ENCODE measurements at regions of chr14 and their contacts with region 1.

Region 1: DNA sequence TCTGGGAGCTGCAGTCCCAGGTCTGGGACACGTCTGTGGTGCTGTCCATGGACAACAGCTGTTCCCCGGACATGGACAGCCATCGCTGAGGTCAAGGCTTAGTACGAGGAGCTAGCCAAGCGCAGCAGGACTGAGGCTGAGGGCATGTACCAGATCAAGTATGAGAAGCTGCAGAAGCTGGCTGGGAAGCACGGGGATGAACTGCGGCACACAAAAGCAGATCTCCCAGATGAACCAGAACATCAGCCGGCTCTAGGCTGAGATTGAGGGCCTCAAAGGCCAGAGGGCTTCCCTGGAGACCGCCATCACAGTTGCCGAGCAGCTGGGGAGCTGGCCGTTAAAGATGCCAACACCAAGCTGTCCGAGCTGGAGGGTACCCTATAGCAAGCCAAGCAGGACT is 375.3 kb downstream of the SEC23A start:
- DNase-seq: no peak
- ATAC-seq: no peak

Region 2: DNA sequence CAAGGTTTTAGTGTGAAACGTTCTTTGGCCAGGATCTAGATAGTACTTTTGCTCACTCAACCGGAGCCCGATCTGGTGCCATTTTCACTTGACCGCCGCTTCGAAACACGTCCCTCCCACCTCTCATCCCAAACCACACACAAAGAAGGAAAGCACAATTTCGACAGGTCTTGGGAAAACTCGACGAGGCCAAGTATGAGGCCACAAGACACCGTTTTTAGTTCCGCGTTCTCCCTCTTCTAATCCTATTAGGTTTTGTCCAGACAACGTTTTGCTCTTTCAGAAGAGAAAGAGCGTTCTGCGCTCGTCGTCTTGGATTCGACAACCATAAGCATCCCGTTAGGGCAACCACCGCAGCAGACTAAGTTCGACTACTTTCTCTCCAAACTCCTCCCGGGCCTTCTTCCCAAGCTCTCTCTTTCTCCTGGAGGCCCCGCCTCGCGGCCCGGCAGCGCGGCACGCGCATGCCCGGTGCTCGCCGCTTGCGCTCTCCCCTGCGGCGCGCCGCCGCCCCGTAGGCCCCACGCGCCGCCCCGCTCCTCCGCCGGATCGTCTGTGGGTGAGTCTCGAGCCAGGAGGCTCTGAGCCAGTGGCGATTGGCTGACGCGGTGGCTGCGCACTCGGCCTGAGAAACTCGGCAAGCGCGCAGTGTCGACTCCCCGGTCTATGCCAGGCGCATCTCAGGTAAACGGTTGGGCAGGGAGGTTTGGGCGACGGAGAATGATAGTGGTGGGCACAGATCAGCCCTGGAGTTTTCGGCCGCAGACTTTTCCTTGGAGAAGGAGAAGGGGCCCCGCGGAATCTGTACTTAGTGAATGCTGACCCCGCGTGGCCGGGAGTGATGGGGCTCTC is 1530.1 kb before region 1 on chr14 and contains the start of gene MIPOL1:
- intact Hi-C with region 1: no loop called
- DNase-seq: peak; percentile 88
- ATAC-seq: peak; percentile 99
- total RNA-seq, gene MIPOL1: 25.8 TPM

Region 3: DNA sequence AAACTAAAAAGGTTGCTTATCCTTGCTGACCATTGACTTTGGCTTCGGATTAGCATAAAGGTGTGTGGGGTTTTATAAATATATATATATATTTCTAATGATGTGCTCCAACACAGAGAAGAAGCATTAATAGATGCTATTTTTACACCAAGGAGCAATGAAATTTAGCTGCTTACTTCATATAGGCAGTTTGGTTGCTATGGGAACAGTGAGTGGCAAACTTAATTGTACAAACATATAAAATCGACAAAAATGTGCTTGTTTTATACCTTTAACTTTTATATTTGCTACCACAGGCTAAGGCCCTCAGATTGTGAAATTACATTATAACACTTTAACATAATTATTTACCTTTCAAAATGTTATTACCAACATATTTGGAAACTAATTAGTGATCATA is 71.9 kb after region 1 on chr14:
- intact Hi-C with region 1: no loop called
- DNase-seq: no peak
- ATAC-seq: no peak

Region 4: DNA sequence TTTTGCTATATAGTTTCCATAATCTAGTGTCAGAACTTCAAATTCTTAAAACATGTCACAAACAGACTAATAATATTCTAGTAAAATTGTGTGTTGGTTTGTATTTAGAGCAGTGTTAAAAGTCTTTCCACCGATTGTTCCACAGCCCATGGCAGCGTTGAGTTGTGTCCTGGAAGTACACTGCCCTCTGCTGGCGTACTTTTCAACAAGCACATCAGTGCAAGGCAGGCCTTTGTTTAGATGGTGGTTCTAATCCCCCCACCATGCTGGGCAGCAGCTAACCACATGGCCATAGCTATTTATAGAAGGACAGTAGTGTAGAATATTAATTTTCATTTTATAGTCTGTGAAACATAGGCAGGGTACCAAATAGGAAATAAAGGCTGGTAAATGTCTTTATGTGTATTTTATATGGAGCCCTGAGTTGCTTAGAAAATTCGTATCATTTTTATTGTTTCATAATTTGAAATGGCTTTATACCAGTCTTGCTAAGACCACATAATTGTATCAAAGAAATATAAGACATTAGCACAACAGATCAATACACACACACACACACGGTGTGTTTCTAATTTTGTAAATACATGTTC is 139.9 kb after region 1 on chr14:
- intact Hi-C with region 1: loop called (anchors 5 kb)
- DNase-seq: peak; percentile 80
- ATAC-seq: peak; percentile 91

Region 5: DNA sequence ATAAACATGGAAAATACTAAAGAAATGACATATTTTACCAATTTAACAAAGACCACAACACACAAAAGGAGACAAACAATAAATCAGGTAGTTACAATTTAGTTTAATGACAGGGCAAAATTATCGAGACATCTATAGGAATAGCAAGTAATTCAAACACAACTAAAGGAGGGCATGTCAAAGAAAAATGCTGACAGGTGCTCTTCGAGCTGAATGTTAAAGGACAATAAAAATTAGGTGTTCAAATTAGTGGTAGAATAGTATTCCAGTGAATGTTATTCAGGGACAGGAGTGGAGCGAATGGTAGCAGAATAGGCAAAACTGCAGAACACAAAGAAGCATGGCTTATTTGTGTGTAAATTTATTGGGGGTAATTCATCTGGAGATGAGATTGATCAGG is 1708.8 kb after region 1 on chr14:
- intact Hi-C with region 1: no loop called
- DNase-seq: no peak
- ATAC-seq: no peak

Measured in sciatic nerve (tissue), 2 donors.